ENCODE measurements at regions of chr2 and their contacts with region 1.

Region 1: GRCh38 chr2:203814661-203815540 is 52.7 kb upstream of the CTLA4 start:
- DNase-seq: no peak
- H3K4me3 Mint-ChIP-seq: peak overlapping the region; percentile 24
- H3K27ac Mint-ChIP-seq: peak overlapping the region; percentile 37
- H3K4me1 Mint-ChIP-seq: peaks cover 62% of the 10 kb centered on the region
- H3K27me3 Mint-ChIP-seq: peaks cover 6% of the 10 kb centered on the region

Region 2: DNA sequence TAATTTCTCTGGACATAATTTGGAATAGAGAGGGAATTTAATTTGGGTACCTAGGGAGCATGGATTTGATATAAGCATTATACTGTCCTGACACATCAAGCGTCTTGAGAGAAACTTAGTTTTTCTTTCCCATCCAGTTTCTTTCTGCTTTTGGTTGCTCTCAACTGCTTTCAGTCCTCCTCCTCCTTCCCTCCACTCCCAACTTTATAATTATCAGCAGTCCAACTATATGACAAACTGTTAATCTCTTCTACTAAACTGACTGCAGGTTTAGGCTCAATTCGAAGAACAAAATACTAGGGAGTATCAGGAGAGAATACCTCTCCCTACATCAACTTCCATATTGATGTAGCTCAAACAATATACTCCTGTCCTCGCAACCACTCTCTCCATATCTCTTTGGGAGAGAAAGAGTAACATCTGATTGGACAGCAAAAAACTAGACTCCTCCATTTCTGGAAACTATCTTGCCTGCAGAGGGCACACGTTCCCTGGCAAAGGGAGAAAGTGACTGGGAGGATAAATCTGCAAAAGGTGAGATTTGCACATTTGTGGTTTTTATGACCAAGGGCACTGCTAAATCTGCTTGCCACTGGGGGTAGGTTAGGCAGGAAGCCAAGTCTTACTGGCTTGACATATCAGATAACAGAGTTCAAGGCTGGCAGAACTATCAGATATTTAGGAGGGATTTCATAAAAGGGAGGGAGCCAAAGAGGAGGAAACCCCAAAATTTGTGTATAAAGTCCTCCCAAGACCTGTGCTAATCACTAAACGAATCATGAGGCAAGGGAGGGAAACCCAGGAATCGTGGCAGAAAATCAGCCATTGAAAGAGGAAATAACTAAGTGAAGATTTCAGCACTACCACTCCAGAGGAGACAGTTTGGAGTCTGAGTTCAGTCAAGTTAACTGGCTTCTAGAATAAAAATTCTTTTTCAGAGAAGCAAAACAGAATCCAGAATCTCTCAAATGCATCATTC is 983.4 kb before region 1 on chr2:
- intact Hi-C with region 1: loop called (anchors 1 kb)
- DNase-seq: peak; percentile 11
- H3K4me3 Mint-ChIP-seq: no peak overlapping the region
- H3K27ac Mint-ChIP-seq: no peak overlapping the region
- H3K4me1 Mint-ChIP-seq: peaks cover 10% of the 10 kb centered on the region
- H3K27me3 Mint-ChIP-seq: peaks cover 3% of the 10 kb centered on the region

Region 3: DNA sequence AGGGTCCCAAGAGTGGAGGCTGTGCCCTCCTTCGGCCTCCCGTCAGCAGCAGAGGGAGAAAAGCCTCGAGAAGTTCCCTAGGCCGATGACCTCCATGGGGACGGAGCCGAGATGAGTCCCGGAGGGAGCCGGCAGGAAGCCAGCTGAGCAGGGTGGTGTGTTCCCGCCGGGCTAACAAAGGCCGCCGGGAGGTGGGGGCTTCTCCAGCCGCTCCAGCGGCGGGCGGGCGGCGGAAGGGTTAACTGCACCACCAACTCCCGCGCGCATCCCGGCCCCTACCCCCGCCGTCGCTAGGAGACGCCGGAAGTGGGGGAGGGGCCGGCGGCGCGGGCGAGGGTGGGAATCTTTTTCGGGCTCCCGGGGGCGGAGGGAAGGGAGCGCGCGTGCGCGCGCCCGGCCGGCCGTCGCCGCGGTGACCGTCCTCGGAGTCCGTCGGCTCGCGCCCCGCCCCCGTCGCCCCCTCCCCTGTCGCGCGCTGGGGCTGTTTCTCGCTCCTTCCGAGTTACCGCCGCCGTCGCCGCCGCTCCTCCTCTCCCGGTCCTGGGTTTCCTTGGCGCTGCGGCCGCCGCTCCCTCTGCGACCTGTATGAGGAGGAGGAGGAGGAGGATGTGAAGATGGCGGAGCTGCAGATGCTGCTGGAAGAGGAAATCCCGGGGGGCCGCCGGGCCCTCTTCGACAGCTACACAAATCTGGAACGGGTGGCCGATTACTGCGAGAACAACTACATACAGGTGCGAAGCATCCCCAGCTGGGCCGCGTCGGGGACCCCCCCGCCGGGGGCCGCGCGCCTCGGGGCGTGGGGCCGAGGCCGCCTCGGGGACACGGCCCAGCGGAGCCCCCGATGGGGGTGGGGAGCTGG is 486.8 kb before region 1 on chr2 and contains the start of gene ABI2:
- intact Hi-C with region 1: loop called (anchors 5 kb)
- DNase-seq: peak; percentile 60
- H3K4me3 Mint-ChIP-seq: peak within 1 kb of the TSS; percentile 94
- H3K27ac Mint-ChIP-seq: peak within 1 kb of the TSS; percentile 91
- H3K4me1 Mint-ChIP-seq: peaks cover 34% of the 10 kb centered on the region
- H3K27me3 Mint-ChIP-seq: no peaks in the 10 kb centered on the region
- total RNA-seq, gene ABI2: 31.4 and 32.3 TPM in 2 replicates

Region 4: DNA sequence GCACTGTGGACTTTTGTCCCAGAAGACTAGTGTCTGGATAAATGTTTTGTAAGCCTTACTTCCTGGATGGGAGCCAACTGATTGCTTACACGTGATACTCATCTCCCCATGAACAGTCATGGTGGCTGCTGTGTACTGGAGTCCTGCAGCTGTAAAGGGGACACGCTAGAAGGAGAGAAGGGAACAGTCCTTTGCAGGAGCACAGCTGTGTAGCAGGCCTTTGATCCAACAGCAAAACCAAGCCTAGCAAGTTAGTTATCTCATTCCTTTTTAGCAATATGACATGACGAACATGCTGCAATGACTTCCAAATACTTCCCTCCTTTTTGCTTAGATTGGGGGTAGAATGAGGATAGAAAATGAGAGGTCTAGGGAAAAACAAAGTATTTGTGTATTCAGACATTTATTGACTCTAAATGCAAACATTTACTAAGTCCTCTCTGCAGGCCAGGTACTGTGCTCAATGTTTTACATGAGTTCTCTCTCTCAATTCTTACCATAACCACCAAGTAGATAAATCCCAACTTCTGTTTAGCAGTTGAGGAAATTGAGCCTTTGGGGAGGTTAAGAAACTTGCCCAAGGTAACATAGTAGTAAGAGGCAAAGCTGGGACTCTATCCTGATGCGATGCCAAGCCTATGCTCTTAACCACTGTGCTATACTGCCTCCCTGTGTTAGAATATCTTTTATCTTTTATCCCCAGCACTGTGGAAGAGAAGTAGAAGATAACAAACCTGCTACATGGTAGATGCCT is 163.9 kb before region 1 on chr2:
- intact Hi-C with region 1: loop called (anchors 1 kb)
- DNase-seq: no peak
- H3K4me3 Mint-ChIP-seq: no peak overlapping the region
- H3K27ac Mint-ChIP-seq: no peak overlapping the region
- H3K4me1 Mint-ChIP-seq: peaks cover 36% of the 10 kb centered on the region
- H3K27me3 Mint-ChIP-seq: peaks cover 5% of the 10 kb centered on the region

Region 5: GRCh38 chr2:203740780-203741281 is 74.1 kb before region 1 on chr2:
- intact Hi-C with region 1: loop called (anchors 1 kb)
- DNase-seq: peak; percentile 66
- H3K4me3 Mint-ChIP-seq: peak overlapping the region; percentile 67
- H3K27ac Mint-ChIP-seq: peak overlapping the region; percentile 97
- H3K4me1 Mint-ChIP-seq: peaks cover 78% of the 10 kb centered on the region
- H3K27me3 Mint-ChIP-seq: no peaks in the 10 kb centered on the region

Region 6: GRCh38 chr2:203830304-203831055 is 15.6 kb after region 1 on chr2:
- intact Hi-C with region 1: loop called (anchors 1 kb)
- DNase-seq: peak; percentile 32
- H3K4me3 Mint-ChIP-seq: peak overlapping the region; percentile 27
- H3K27ac Mint-ChIP-seq: peak overlapping the region; percentile 87
- H3K4me1 Mint-ChIP-seq: peaks cover 31% of the 10 kb centered on the region
- H3K27me3 Mint-ChIP-seq: no peaks in the 10 kb centered on the region

Measured in activated T-helper 1 cell treated with anti-CD3 and anti-CD28 coated beads, Interleukin-12 subunit alpha, Interleukin-12 subunit beta, Interleukin-2, Interleukin-4 antibody, amounts not matched to agents 30 ng/mL and 10 ng/mL and 1 ng/mL, durations not matched to agents 14 hours and 24 hours and 36 hours (primary cell).